ENCODE measurements at regions of chr16 and their contacts with region 1.

Region 1: GRCh38 chr16:28846080-28846932 is at the start of gene TUFM:
- DNase-seq: peak; percentile 99
- total RNA-seq, gene TUFM: 184 TPM

Region 2: GRCh38 chr16:28823872-28824716 is 22.2 kb before region 1 on chr16:
- intact Hi-C with region 1: loop called (anchors 1 kb)
- DNase-seq: peak; percentile 97

Region 3: GRCh38 chr16:28863929-28864793 is 17.9 kb after region 1 on chr16:
- intact Hi-C with region 1: loop called (anchors 1 kb)
- DNase-seq: no peak

Region 4: GRCh38 chr16:28924732-28925385 is 78.6 kb after region 1 on chr16 and contains the start of gene RABEP2:
- intact Hi-C with region 1: loop called (anchors 2 kb)
- DNase-seq: peak; percentile 94
- total RNA-seq, gene RABEP2: 14.3 TPM

Region 5: DNA sequence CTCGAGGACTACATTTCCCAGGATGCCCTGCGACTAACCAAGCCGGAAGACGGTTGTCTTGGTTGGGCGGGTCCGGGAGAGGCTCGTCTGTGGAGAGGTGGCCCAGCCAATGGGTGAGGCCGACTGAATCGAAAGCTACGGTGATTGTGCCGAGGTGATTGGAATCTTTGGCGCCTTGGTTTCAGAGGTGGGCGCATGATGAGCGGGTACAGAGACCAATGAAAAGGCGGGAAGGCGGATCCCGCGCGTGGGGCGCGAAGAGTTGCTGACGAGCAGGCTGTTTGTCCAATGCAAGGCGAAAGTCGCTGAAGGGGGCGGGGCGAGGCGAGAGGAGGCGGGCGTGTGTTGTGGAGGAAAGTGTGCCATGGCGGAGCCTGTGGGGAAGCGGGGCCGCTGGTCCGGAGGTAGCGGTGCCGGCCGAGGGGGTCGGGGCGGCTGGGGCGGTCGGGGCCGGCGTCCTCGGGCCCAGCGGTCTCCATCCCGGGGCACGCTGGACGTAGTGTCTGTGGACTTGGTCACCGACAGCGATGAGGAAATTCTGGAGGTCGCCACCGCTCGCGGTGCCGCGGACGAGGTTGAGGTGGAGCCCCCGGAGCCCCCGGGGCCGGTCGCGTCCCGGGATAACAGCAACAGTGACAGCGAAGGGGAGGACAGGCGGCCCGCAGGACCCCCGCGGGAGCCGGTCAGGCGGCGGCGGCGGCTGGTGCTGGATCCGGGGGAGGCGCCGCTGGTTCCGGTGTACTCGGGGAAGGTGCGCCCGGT is 104.5 kb after region 1 on chr16 and contains the start of gene NFATC2IP:
- intact Hi-C with region 1: loop called (anchors 1 kb)
- DNase-seq: peak; percentile 100
- total RNA-seq, gene NFATC2IP: 17.9 TPM